Naive thymus-derived CD4-positive, alpha-beta T cell (primary cell): ENCODE measurements at regions of chr10 and their contacts with region 1.

Region 1: GRCh38 chr10:87861953-87862678 is 1.2 kb downstream of the KLLN start:
- DNase-seq: peak; percentile 85 to 95 (median 93)
- ATAC-seq: peak; percentile 86
- H3K4me3 ChIP-seq: peak overlapping the region; percentile 90
- H3K4me3 Mint-ChIP-seq: peak overlapping the region; percentile 91 to 100 (median 96)
- H3K27ac ChIP-seq: peak overlapping the region; percentile 75
- H3K27ac Mint-ChIP-seq: peak overlapping the region; percentile 90 to 99 (median 97)
- H3K4me1 ChIP-seq: peaks cover 6 to 16% of the 10 kb centered on the region in 2 donors
- H3K4me1 Mint-ChIP-seq: peaks cover 25 to 36% (median 32%) of the 10 kb centered on the region in 7 donors
- H3K27me3 ChIP-seq: no peaks in the 10 kb centered on the region
- H3K27me3 Mint-ChIP-seq: no peaks in the 10 kb centered on the region

Region 2: GRCh38 chr10:87511526-87511925 is 350.6 kb before region 1 on chr10:
- CTCF ChIA-PET with region 1: no interaction called
- POLR2A ChIA-PET with region 1: no interaction called
- intact Hi-C with region 1: no loop called
- DNase-seq: no peak
- ATAC-seq: no peak
- H3K4me3 ChIP-seq: no peak overlapping the region
- H3K4me3 Mint-ChIP-seq: no peak overlapping the region
- H3K27ac ChIP-seq: no peak overlapping the region
- H3K27ac Mint-ChIP-seq: peak overlapping the region in 1 of 9 donors; percentile 19
- H3K4me1 ChIP-seq: peaks cover under 1 to 3% of the 10 kb centered on the region in 2 donors
- H3K4me1 Mint-ChIP-seq: peaks cover 4 to 32% (median 22%) of the 10 kb centered on the region in 7 donors
- H3K27me3 ChIP-seq: no peaks in the 10 kb centered on the region
- H3K27me3 Mint-ChIP-seq: no peaks in the 10 kb centered on the region

Region 3: DNA sequence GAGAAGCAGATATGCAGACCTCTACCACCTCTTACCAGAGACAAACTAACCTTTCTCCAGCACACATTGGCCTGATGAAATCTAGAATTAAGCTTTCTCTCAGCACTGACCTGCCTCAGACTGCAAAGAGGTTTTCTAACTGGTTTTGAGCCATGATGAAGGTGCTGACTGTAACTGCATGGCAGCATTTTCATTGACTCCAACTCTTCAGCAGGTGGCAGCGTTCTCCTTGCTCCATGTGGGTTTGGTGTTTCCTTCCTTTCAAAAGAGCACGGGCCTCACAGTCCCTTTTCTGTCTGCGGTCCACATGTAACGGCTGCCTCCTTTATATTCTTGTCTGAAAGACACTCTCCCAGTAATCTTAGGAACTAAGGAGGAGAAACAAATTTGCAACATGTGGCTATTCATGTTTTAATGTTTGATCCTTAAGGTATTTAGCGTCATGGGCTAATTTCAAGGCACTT is 11.3 kb before region 1 on chr10:
- CTCF ChIA-PET with region 1: interaction called, 5 read pairs
- POLR2A ChIA-PET with region 1: interaction called, 13 read pairs
- intact Hi-C with region 1: loop called in 1 of 2 experiments (anchors 1 kb)
- DNase-seq: peak in 8 of 9 donors; percentile 28 to 68 (median 54)
- ATAC-seq: peak; percentile 87
- H3K4me3 ChIP-seq: no peak overlapping the region
- H3K4me3 Mint-ChIP-seq: peak overlapping the region in 3 of 10 donors; percentile 1 to 49 (median 6)
- H3K27ac ChIP-seq: no peak overlapping the region
- H3K27ac Mint-ChIP-seq: peak overlapping the region in 1 of 9 donors; percentile 2
- H3K4me1 ChIP-seq: peaks cover 0 to 3% of the 10 kb centered on the region in 2 donors
- H3K4me1 Mint-ChIP-seq: peaks cover 6 to 23% (median 19%) of the 10 kb centered on the region in 7 donors
- H3K27me3 ChIP-seq: no peaks in the 10 kb centered on the region
- H3K27me3 Mint-ChIP-seq: peaks cover 0 to 8% (median 0%) of the 10 kb centered on the region in 5 donors

Region 4: GRCh38 chr10:88064608-88065382 is 202.7 kb after region 1 on chr10:
- CTCF ChIA-PET with region 1: interaction called, 3 read pairs
- POLR2A ChIA-PET with region 1: interaction called, 18 read pairs
- intact Hi-C with region 1: loop called in 1 of 2 experiments (anchors 1 kb)
- DNase-seq: peak in 7 of 9 donors; percentile 72 to 93 (median 87)
- ATAC-seq: peak; percentile 92
- H3K4me3 ChIP-seq: no peak overlapping the region
- H3K4me3 Mint-ChIP-seq: peak overlapping the region; percentile 14 to 77 (median 66)
- H3K27ac ChIP-seq: peak overlapping the region; percentile 67
- H3K27ac Mint-ChIP-seq: peak overlapping the region; percentile 26 to 99 (median 95)
- H3K4me1 ChIP-seq: peaks cover 6 to 77% of the 10 kb centered on the region in 2 donors
- H3K4me1 Mint-ChIP-seq: peaks cover 0 to 83% (median 65%) of the 10 kb centered on the region in 7 donors
- H3K27me3 ChIP-seq: no peaks in the 10 kb centered on the region
- H3K27me3 Mint-ChIP-seq: peaks cover 0 to 4% (median 0%) of the 10 kb centered on the region in 5 donors

Region 5: DNA sequence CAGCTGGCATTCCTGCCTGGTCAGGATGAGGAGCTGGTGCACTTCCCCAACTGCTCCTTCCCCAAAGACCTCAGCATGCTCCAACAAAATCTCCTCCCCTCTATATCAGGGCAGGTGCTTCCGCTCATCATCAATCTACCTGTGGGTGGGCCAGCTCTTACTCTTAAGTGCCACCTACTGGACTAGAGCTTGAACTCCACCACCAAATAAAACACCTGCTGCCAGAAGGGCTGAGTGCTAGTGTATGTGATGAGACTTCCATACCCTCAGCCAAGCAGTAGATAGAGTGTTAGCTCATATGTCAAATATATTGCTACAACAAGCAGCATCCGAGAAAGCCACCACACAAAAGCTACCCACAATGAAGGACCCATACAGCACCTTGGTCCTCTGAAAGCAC is 456.7 kb after region 1 on chr10:
- CTCF ChIA-PET with region 1: no interaction called
- POLR2A ChIA-PET with region 1: interaction called, 3 read pairs
- intact Hi-C with region 1: loop called in 1 of 2 experiments (anchors 5 kb)
- DNase-seq: peak in 2 of 9 donors; percentile 1 to 2
- ATAC-seq: no peak
- H3K4me3 ChIP-seq: no peak overlapping the region
- H3K4me3 Mint-ChIP-seq: no peak overlapping the region
- H3K27ac ChIP-seq: no peak overlapping the region
- H3K27ac Mint-ChIP-seq: no peak overlapping the region
- H3K4me1 ChIP-seq: no peaks in the 10 kb centered on the region
- H3K4me1 Mint-ChIP-seq: peaks cover 0 to 21% (median 0%) of the 10 kb centered on the region in 7 donors
- H3K27me3 ChIP-seq: no peaks in the 10 kb centered on the region
- H3K27me3 Mint-ChIP-seq: peaks cover 0 to 6% (median 0%) of the 10 kb centered on the region in 5 donors

Region 6: GRCh38 chr10:88582806-88583583 is 720.9 kb after region 1 on chr10 and contains the start of gene RNLS:
- CTCF ChIA-PET with region 1: no interaction called
- POLR2A ChIA-PET with region 1: interaction called, 8 read pairs
- intact Hi-C with region 1: loop called in 1 of 2 experiments (anchors 1 kb)
- DNase-seq: peak; percentile 46 to 66 (median 62)
- ATAC-seq: peak; percentile 90
- H3K4me3 ChIP-seq: peak within 1 kb of the TSS; percentile 90
- H3K4me3 Mint-ChIP-seq: peak within 1 kb of the TSS; percentile 88 to 95 (median 90)
- H3K27ac ChIP-seq: peak within 1 kb of the TSS; percentile 80
- H3K27ac Mint-ChIP-seq: peak within 1 kb of the TSS; percentile 84 to 97 (median 91)
- H3K4me1 ChIP-seq: peaks cover 6 to 8% of the 10 kb centered on the region in 2 donors
- H3K4me1 Mint-ChIP-seq: peaks cover 8 to 16% (median 12%) of the 10 kb centered on the region in 7 donors
- H3K27me3 ChIP-seq: no peaks in the 10 kb centered on the region
- H3K27me3 Mint-ChIP-seq: peaks cover 0 to 19% (median 4%) of the 10 kb centered on the region in 5 donors
- total RNA-seq, gene RNLS: 1.5 to 3.6 (median 2.9) TPM

Region 7: GRCh38 chr10:88990384-88991160 is 1128.5 kb after region 1 on chr10 and contains the start of gene FAS:
- CTCF ChIA-PET with region 1: no interaction called
- POLR2A ChIA-PET with region 1: no interaction called
- intact Hi-C with region 1: loop called (anchors 2 to 5 kb)
- DNase-seq: peak; percentile 50 to 81 (median 61)
- ATAC-seq: peak; percentile 86
- H3K4me3 ChIP-seq: peak within 1 kb of the TSS; percentile 86
- H3K4me3 Mint-ChIP-seq: peak within 1 kb of the TSS; percentile 92 to 100 (median 96)
- H3K27ac ChIP-seq: peak within 1 kb of the TSS; percentile 77
- H3K27ac Mint-ChIP-seq: peak within 1 kb of the TSS; percentile 91 to 96 (median 94)
- H3K4me1 ChIP-seq: peaks cover 42 to 45% of the 10 kb centered on the region in 2 donors
- H3K4me1 Mint-ChIP-seq: peaks cover 41 to 83% (median 68%) of the 10 kb centered on the region in 7 donors
- H3K27me3 ChIP-seq: no peaks in the 10 kb centered on the region
- H3K27me3 Mint-ChIP-seq: no peaks in the 10 kb centered on the region
- total RNA-seq, gene FAS: 5.6 to 67.4 (median 8.3) TPM